Right ventricle myocardium inferior (tissue), 1 donor: ENCODE measurements at regions of chr3 and their contacts with region 1.

Region 1: GRCh38 chr3:38644016-38644661 is 5.3 kb downstream of the SCN5A start:
- DNase-seq: no peak
- ATAC-seq: no peak

Region 2: DNA sequence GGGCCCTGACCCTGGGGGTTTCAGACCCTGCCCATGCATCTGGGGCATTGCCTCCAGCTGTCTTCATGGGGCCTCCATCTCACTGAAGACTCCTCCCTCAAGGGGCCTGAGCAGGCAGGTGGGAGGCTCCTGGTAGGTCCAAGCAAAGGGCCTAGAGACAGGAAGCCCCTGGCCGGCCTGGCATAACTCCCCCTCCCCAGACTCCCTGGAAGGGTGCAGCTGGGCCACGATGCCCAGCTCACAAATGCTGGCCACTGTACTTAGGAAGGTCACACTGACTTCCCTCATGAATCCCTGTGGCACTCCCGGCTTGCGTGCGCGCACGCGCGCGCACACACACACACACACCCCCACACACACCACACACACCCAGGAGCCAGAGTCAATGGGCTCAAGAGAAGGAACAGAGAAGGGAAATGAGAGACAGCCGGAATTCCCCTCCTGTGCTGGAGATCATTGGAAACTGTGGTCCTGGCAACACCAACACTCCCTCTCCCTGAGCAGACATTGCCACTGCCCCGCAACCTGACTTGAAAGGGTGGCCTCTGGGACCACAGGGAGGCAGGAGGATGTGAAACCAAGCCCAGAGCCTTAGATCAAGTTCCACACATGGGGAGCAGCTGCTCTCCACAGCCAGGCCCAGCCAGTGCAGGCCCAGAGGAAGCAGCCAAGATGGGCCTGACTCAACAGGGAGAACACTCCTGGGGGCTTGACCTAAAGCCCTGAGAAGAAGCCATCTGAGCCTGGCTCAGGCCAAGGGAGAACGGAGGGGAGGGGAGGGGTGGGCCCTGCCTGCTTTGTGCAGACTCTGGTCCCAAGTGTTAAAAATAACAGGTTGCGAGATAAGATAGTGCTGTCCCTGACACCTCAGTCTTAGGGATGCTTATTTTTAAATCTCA is 64.3 kb before region 1 on chr3:
- intact Hi-C with region 1: loop called (anchors 2 kb)
- DNase-seq: peak; percentile 53
- ATAC-seq: peak; percentile 82

Region 3: DNA sequence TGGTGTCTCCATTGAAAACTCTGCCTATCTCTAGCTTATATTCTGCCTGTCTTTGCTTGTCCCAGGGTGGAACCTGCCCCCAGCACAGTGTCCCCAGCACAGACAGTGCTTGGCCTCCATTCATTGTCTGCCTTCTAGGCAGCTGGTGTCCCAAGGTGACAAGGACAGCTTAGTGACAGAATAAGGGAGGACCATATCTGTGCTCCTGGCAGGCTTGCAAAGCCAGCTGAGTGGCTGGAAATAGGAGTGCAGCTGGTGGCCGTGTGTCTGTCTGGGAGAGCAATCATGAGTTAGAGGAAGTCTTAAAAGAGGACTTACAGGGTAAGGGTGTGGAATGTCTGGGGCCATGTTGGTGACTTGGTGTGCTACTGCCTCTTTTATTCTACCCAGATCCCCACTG is 28.0 kb before region 1 on chr3:
- intact Hi-C with region 1: loop called (anchors 2 kb)
- DNase-seq: no peak
- ATAC-seq: peak; percentile 93

Region 4: GRCh38 chr3:38698760-38699159 is 54.6 kb after region 1 on chr3:
- intact Hi-C with region 1: no loop called
- DNase-seq: no peak
- ATAC-seq: peak; percentile 44

Region 5: DNA sequence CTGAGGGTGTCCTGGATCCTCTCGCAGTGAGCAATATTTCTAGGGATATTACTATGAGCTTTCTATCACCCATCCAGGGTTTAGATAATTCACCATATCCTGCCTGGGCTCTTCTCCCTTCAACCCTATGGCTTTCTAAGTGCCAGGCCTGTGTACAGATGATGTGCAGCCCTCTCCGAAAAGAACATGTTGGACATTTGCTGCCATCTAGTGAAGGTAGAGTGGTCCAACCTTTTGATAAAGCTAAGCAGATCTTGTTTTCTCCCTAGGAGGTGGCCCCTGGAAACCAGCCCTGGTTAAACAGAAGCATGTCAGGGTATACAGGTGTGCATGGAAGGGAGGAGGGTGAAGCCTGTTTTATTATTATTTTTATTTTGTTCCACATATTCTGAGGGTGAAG is 199.8 kb after region 1 on chr3:
- intact Hi-C with region 1: no loop called
- DNase-seq: no peak
- ATAC-seq: peak; percentile 80

Region 6: DNA sequence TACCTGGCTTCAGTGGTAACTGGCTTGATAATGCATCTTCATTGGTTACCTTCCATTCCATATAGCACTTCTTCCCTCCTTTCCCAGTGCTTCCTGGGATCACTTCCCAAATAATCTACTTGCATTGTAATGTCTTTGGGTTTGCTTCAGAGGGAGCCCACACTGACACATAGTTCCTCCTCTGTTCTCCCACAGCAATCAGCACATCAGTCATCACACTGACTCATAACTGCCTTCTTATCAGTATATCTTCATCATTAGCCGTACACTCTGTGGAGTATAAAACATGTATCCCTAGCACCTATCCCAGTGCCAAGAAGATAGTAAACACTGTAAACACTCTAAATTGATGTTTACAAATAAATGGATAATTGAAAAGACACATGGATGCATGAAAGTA is 263.3 kb after region 1 on chr3:
- intact Hi-C with region 1: no loop called
- DNase-seq: no peak
- ATAC-seq: no peak